WTC11 (cell line): ENCODE measurements at regions of chr1 and their contacts with region 1.

Region 1: DNA sequence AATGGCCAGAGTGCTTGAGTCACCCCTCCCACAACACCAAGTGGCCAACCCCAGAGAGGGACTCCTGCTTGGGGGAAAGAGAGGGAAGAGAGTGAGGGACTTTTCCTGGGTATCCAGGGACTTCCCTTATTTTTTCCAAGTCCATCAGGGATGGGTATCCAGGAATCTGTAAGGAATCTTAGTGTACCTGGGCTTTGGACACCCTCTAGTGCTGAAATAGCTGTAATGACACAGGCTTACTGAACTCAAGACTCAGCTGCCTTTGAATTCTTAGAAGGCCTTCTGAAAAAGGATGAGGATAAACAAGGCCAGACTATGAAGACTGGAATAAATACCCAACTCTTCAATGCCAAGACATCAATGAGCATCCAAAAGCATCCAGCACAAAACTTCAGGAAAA is 12.0 kb downstream of the TSHB start:
- DNase-seq: no peak
- ATAC-seq: peak; percentile 90
- H3K4me3 Mint-ChIP-seq: no peak overlapping the region
- H3K27ac Mint-ChIP-seq: no peak overlapping the region
- H3K4me1 Mint-ChIP-seq: peaks cover 1% of the 10 kb centered on the region
- H3K27me3 Mint-ChIP-seq: no peaks in the 10 kb centered on the region
- CTCF ChIP-seq: peak; percentile 37; the same call in 1 of the 2 replicates

Region 2: GRCh38 chr1:114979278-114979891 is 62.3 kb before region 1 on chr1:
- CTCF ChIA-PET with region 1: interaction called, 13 read pairs
- POLR2A ChIA-PET with region 1: no interaction called
- DNase-seq: peak; percentile 77
- ATAC-seq: no peak
- H3K4me3 Mint-ChIP-seq: no peak overlapping the region
- H3K27ac Mint-ChIP-seq: no peak overlapping the region
- H3K4me1 Mint-ChIP-seq: no peaks in the 10 kb centered on the region
- H3K27me3 Mint-ChIP-seq: no peaks in the 10 kb centered on the region
- CTCF ChIP-seq: peak; percentile 69

Region 3: DNA sequence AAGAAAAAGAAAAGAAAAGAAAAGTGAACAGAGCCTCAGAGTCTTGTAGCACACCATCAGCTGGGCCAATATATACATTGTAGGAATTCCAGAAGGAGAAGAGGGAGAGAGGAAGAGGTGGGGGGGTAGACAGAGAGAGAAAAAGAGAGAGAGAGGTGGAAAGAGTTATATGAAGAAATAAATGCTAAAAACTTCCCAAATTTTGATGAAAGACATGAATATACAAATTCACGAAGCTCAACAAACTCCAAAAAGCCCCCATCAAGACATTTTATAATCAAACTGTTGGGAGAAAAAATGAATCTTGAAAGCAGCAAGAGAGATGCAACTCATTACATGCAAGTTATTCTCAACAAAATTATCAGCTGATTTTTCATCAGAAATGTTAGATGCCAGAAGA is 53.6 kb before region 1 on chr1:
- CTCF ChIA-PET with region 1: interaction called, 10 read pairs
- POLR2A ChIA-PET with region 1: no interaction called
- DNase-seq: no peak
- ATAC-seq: no peak
- H3K4me3 Mint-ChIP-seq: no peak overlapping the region
- H3K27ac Mint-ChIP-seq: no peak overlapping the region
- H3K4me1 Mint-ChIP-seq: no peaks in the 10 kb centered on the region
- H3K27me3 Mint-ChIP-seq: peaks cover 5% of the 10 kb centered on the region; the same call in 1 of the 2 replicates
- CTCF ChIP-seq: no peak

Region 4: GRCh38 chr1:115013792-115014191 is 27.9 kb before region 1 on chr1:
- CTCF ChIA-PET with region 1: no interaction called
- POLR2A ChIA-PET with region 1: no interaction called
- DNase-seq: no peak
- ATAC-seq: no peak
- H3K4me3 Mint-ChIP-seq: no peak overlapping the region
- H3K27ac Mint-ChIP-seq: no peak overlapping the region
- H3K4me1 Mint-ChIP-seq: peaks cover 4% of the 10 kb centered on the region
- H3K27me3 Mint-ChIP-seq: peaks cover 4% of the 10 kb centered on the region
- CTCF ChIP-seq: no peak

Region 5: GRCh38 chr1:115077286-115077983 is 35.8 kb after region 1 on chr1:
- CTCF ChIA-PET with region 1: no interaction called
- POLR2A ChIA-PET with region 1: no interaction called
- DNase-seq: no peak
- ATAC-seq: no peak
- H3K4me3 Mint-ChIP-seq: no peak overlapping the region
- H3K27ac Mint-ChIP-seq: no peak overlapping the region
- H3K4me1 Mint-ChIP-seq: no peaks in the 10 kb centered on the region
- H3K27me3 Mint-ChIP-seq: no peaks in the 10 kb centered on the region; the same call in none of the 2 replicates
- CTCF ChIP-seq: no peak